ENCODE measurements at regions of chr11 and their contacts with region 1.

Region 1: DNA sequence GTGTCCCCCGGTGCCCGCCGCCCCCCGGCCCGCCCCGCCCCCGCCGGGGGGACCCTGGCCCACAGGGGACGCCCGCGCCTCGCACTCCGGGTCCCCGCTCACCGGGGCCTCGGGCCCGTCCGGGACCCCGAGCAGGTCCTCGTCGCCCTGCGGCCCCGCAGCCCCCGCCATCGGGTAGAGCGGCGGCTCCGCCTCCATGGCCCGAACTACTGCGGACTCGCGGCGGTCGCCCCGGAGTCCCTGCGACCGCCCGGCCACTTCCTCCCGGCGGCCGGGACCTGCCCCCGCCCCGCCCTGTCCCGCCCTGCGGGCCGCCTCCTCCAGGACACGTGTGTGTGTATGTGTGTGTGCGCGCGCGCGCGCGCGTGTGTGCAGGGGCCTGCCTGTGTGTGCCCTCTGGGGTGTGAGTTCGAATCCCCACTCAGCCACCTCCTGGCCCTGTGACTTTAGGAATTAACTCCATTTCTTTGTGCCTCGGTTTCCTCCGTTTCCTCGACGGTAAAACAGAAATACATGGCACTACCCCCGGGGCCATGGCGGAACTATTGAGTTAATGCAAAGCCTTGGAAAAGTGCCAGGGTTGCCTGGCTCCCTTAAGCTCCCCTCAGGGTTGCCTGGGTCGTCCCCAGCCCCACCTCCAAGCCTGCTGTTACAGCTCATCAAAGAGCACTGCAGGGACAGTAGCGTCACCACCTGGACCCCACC is at the start of gene UNC93B1:
- DNase-seq: peak; percentile 80
- ATAC-seq: peak; percentile 66
- H3K4me3 Mint-ChIP-seq: peak within 1 kb of the TSS; percentile 91
- H3K27ac Mint-ChIP-seq: peak within 1 kb of the TSS; percentile 95
- H3K4me1 Mint-ChIP-seq: peaks cover 72% of the 10 kb centered on the region
- H3K27me3 Mint-ChIP-seq: no peaks in the 10 kb centered on the region
- CTCF ChIP-seq: no peak
- total RNA-seq, gene UNC93B1: 117 and 133 TPM in 2 replicates

Region 2: GRCh38 chr11:68030318-68031138 is 26.5 kb after region 1 on chr11 and contains the start of gene NDUFS8:
- CTCF ChIA-PET with region 1: no interaction called
- POLR2A ChIA-PET with region 1: interaction called, 10 read pairs
- intact Hi-C with region 1: loop called (anchors 1 kb)
- DNase-seq: peak; percentile 92
- ATAC-seq: peak; percentile 97
- H3K4me3 Mint-ChIP-seq: peak within 1 kb of the TSS; percentile 93
- H3K27ac Mint-ChIP-seq: peak within 1 kb of the TSS; percentile 83
- H3K4me1 Mint-ChIP-seq: peaks cover 22% of the 10 kb centered on the region
- H3K27me3 Mint-ChIP-seq: no peaks in the 10 kb centered on the region
- CTCF ChIP-seq: no peak
- total RNA-seq, gene NDUFS8: 93.7 and 101 TPM in 2 replicates

Region 3: GRCh38 chr11:68040101-68040956 is 36.3 kb after region 1 on chr11:
- CTCF ChIA-PET with region 1: interaction called, 7 read pairs
- POLR2A ChIA-PET with region 1: interaction called, 10 read pairs
- intact Hi-C with region 1: loop called (anchors 2 kb)
- DNase-seq: peak; percentile 71
- ATAC-seq: peak; percentile 75
- H3K4me3 Mint-ChIP-seq: peak overlapping the region; percentile 88
- H3K27ac Mint-ChIP-seq: peak overlapping the region; percentile 92
- H3K4me1 Mint-ChIP-seq: peaks cover 38% of the 10 kb centered on the region
- H3K27me3 Mint-ChIP-seq: no peaks in the 10 kb centered on the region
- CTCF ChIP-seq: no peak

Region 4: GRCh38 chr11:68121067-68121899 is 117.3 kb after region 1 on chr11 and contains the start of gene CHKA:
- CTCF ChIA-PET with region 1: no interaction called
- POLR2A ChIA-PET with region 1: no interaction called
- intact Hi-C with region 1: loop called (anchors 5 kb)
- DNase-seq: peak; percentile 92
- ATAC-seq: peak; percentile 94
- H3K4me3 Mint-ChIP-seq: peak within 1 kb of the TSS; percentile 87
- H3K27ac Mint-ChIP-seq: peak within 1 kb of the TSS; percentile 87
- H3K4me1 Mint-ChIP-seq: peaks cover 29% of the 10 kb centered on the region
- H3K27me3 Mint-ChIP-seq: no peaks in the 10 kb centered on the region
- CTCF ChIP-seq: no peak
- total RNA-seq, gene CHKA: 11.9 and 16.1 TPM in 2 replicates

Region 5: DNA sequence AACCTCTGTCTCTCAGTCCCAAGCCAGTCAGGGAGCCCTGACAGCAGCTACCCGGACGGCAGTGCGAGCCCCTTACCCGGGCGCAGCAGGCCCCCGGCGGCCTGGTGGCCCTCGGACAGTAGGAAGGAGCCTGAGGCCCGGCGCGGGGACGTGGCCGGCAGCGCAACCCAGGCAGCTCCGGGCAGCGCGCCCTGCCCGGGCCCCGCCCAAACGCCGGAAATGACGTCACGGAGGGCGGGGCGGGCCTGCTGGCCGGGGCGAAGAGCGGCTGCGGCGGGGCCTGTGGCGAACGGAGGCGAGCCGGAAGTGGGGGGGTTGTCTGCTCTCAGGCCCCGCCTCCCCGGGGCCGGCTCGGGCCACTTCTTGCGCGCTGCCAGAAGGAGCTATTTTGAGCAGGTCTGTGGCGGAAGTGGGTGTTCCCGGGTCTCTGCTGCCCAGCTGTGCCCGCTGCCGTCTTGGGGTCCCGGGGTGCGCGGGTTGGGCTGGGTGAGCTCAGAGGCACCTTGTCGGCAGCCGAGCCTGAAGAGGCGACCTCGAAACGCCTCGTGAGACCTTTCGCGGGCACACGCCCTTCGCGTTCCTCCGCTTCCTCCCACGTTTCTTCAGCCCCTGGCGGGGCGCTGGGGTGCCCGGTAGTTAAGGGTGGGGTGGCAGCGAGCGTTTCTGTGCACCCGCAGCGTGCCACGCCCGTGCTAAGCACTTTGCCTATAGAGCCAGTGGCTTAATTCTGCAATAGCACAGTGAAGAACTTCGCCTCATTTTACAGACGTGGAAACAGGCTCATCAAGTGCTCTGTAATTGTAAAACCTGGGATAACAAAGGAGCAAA is 268.0 kb after region 1 on chr11 and contains the start of gene C11orf24:
- CTCF ChIA-PET with region 1: no interaction called
- POLR2A ChIA-PET with region 1: interaction called, 8 read pairs
- intact Hi-C with region 1: loop called (anchors 2 kb)
- DNase-seq: peak; percentile 95
- ATAC-seq: peak; percentile 78
- H3K4me3 Mint-ChIP-seq: peak within 1 kb of the TSS; percentile 95
- H3K27ac Mint-ChIP-seq: peak within 1 kb of the TSS; percentile 98
- H3K4me1 Mint-ChIP-seq: peaks cover 79% of the 10 kb centered on the region
- H3K27me3 Mint-ChIP-seq: no peaks in the 10 kb centered on the region
- CTCF ChIP-seq: no peak
- total RNA-seq, gene C11orf24: 75.5 and 78.0 TPM in 2 replicates

Region 6: GRCh38 chr11:68459886-68460740 is 456.1 kb after region 1 on chr11:
- CTCF ChIA-PET with region 1: no interaction called
- POLR2A ChIA-PET with region 1: no interaction called
- intact Hi-C with region 1: loop called (anchors 5 kb)
- DNase-seq: peak; percentile 81
- ATAC-seq: peak; percentile 92
- H3K4me3 Mint-ChIP-seq: peak overlapping the region; percentile 94
- H3K27ac Mint-ChIP-seq: peak overlapping the region; percentile 97
- H3K4me1 Mint-ChIP-seq: peaks cover 39% of the 10 kb centered on the region
- H3K27me3 Mint-ChIP-seq: no peaks in the 10 kb centered on the region
- CTCF ChIP-seq: no peak

Measured in activated B cell treated with CpG ODN at 0.5 μM for 24 hours (primary cell).